ENCODE measurements at regions of chr1 and their contacts with region 1.

Region 1: DNA sequence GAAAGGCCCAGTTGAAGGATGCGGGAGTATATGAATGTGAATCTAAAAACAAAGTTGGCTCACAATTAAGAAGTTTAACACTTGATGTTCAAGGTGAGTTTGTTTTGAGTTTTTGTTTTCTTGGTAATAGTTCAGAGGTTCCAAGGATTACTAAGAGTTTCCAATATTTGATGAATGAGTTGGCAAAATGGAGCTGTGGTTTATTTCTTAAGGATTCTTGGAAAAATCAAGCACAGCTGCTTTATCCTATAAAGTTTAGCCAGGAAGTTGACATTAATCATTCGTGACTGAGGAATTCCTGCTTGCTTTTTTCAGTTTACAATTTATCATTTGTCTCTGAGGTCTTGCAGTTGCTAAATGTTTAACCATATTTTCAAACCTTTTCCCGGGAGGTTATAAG is 15.1 kb downstream of the VCAM1 start:
- DNase-seq: no peak

Region 2: GRCh38 chr1:100387209-100387608 is 347.5 kb before region 1 on chr1:
- intact Hi-C with region 1: no loop called
- DNase-seq: no peak

Region 3: DNA sequence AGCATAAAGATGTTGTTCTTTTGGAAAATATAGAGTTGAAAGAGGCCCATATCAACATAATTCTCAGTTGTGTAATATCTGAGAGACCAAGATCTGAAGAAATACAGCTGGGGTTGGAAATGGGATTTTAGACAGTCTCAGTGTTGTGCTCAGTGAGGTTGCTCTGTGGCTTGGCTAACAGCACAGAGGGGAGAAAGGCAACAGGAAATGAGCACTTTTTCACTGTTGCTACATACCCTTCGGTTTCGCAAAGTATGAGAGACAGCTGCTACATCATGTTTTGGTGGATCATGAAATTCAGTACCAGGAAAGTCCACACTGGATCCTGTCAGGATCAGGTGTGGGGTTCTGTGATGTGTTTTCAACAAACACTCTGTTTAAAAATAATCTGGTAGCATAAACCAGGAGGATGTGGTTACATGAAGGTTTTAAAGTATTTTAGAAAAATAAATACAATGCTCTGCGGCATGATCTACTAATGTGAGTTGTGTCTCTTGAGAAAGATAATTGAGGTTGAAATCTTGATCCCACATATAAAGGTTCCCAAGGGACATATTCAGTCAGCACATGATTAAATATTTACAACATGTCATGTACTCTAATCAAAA is 203.7 kb before region 1 on chr1:
- intact Hi-C with region 1: loop called (anchors 10 kb)
- DNase-seq: no peak

Region 4: DNA sequence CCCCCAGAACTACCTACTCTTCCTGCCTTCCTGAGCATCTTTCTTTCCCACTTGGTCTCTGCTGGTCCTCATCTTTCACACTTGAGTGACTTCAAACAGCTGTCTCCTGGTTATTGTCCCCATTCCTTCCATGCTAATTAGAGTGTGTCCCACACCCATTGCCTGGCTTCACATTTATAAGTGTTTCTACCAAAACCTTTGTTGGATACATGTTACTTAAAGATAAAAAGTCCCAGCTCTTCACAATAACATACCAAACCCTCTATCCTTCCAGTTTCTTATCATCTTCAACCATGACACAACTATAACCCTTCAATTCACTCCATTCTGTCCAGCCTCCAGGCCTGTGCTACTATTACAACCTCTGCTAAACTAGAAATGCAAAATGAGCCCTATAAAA is 25.8 kb after region 1 on chr1:
- intact Hi-C with region 1: no loop called
- DNase-seq: no peak

Region 5: GRCh38 chr1:100794748-100795645 is 60.3 kb after region 1 on chr1:
- intact Hi-C with region 1: no loop called
- DNase-seq: no peak

Measured in cardiac septum (tissue), 1 donor.